ENCODE measurements at regions of chr1 and their contacts with region 1.

Region 1: DNA sequence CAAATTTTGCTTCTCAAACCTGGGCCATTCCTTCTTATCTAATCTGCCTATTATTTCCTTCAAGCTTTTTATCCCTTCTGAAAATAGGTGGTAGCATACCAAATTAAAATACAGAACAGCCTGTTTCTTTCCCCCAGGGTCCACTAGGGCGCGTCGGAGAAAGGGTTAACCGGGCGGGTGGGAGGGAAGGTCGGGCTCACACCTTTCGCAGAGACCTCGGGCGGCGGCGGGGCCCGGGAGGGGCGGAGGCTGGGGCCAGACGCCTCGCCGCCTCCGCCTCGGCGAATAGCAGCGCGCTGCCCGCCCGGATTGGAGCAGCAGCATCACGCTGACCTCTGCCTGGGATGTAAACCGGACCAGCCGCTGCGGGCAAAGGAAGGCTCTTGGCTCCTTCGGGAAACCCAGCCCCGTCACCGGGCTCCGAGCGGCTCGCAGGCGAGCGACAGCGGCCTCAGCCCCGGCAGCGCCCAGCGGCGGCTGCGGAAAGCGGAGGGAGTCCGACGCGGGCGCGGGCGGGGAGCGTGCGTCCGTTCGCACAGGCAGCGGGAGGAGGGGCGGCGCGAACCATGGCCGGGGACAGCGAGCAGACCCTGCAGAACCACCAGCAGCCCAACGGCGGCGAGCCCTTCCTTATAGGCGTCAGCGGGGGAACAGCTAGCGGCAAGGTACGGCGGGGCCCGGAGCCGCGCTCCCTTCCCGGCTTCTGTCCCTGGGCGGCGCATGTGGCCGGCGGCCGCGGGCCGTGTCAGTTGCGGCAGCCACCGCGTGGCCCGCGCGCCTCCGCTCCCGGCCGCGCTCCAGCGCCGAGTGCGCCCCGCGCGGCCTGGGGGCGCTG is at the start of gene UCK2:
- DNase-seq: peak; percentile 85 to 89
- ATAC-seq: peak; percentile 90 to 93 (median 92)
- H3K4me3 ChIP-seq: peak within 1 kb of the TSS; percentile 93
- H3K27ac ChIP-seq: peak within 1 kb of the TSS; percentile 93
- H3K4me1 ChIP-seq: peaks cover 10% of the 10 kb centered on the region
- H3K27me3 ChIP-seq: no peaks in the 10 kb centered on the region
- CTCF ChIP-seq: peak; percentile 24
- total RNA-seq, gene UCK2: 17.2 to 94.6 (median 29.7) TPM

Region 2: DNA sequence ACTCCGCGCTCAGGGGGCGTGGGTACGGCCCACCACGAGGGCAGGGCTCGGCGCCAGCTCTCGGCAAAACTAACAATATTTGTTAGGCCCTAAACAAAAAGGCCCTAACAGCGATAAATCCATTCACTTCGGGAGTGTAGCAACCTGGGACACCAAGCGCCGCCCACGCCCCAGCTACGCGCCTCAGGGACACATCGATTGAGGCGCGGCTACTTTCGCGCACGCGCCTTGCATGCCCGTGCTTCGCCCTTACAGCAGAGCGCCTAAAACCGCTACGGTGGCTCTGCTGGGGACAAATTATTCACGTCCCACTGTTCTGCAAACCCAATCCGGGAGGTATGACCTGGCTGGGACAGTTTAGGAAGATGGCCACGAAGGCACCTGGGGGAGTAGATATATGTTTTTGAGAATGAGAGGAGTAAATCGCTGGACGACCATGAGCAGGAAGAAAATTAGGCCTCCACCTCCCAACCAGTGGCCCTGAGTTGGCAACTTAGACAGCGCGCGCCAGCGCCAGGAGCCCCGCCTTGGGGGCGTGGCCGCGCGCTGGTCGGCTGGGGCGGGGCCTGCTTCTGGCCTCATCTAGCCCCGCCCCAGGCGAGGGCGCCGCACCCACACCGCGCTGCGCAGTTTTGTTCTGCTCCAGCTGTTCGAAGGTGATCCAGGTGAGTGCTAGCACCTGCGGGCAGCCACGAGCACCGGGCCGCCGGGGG is 196.7 kb before region 1 on chr1 and contains the start of gene MGST3:
- intact Hi-C with region 1: loop called in 1 of 2 experiments (anchors 5 kb)
- DNase-seq: peak; percentile 97 to 99
- ATAC-seq: peak; percentile 92 to 96 (median 93)
- H3K4me3 ChIP-seq: peak within 1 kb of the TSS; percentile 95
- H3K27ac ChIP-seq: peak within 1 kb of the TSS; percentile 99
- H3K4me1 ChIP-seq: peaks cover 37% of the 10 kb centered on the region
- H3K27me3 ChIP-seq: no peaks in the 10 kb centered on the region
- CTCF ChIP-seq: no peak
- total RNA-seq, gene MGST3: 223 to 318 (median 258) TPM

Region 3: DNA sequence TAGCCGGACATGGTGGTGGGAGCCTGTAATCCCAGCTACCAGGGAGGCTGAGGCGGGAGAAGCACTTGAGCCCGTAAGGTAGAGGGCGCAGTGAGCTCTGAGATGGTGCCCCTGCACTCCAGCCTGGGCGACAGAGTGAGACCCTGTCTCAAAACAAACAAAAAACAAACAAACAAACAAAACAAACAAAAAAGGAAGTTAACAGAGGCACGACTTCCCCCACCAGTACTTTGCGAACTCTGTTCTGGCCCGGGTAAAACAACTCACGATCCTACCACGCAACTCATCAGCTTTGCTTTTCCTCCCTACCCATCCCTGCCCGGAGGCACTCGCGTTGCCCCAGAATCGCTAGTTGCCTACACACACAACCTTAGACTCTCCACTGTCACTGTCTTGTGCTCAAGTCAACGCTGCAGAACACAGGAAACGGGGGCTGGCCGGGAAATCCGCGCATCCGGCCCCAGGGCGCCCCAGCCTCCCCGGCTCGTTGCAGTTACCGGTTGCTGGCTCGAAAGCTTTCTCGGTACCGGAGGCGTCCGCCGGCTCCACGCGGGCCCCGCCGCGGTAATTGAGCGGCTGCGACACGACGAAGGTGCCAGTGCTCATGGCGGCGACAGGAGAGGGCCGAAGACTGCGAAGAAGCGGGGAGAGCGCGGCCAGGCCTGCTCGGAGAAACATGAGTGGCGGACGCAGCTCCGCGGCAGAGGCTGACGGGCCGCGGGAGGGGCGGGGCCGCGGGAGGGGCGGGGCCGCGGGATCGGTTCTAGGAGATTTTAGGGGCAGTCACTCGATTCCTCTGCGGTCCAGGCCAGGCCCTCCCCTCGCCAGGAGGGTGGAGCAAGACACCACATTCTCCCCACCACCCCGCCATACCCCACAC is 129.4 kb before region 1 on chr1 and contains the start of gene ALDH9A1:
- intact Hi-C with region 1: loop called in 1 of 2 experiments (anchors 5 kb)
- DNase-seq: peak; percentile 93 to 94
- ATAC-seq: peak; percentile 90 to 94 (median 93)
- H3K4me3 ChIP-seq: peak within 1 kb of the TSS; percentile 77
- H3K27ac ChIP-seq: peak within 1 kb of the TSS; percentile 91
- H3K4me1 ChIP-seq: peaks cover 16% of the 10 kb centered on the region
- H3K27me3 ChIP-seq: no peaks in the 10 kb centered on the region
- CTCF ChIP-seq: peak; percentile 33
- total RNA-seq, gene ALDH9A1: 40.9 to 69.3 (median 49.9) TPM

Region 4: GRCh38 chr1:165768513-165769394 is 58.7 kb before region 1 on chr1 and contains the start of gene TMCO1:
- intact Hi-C with region 1: loop called (anchors 5 kb)
- DNase-seq: peak; percentile 94 to 97
- ATAC-seq: peak; percentile 99 to 100 (median 100)
- H3K4me3 ChIP-seq: peak within 1 kb of the TSS; percentile 99
- H3K27ac ChIP-seq: peak within 1 kb of the TSS; percentile 95
- H3K4me1 ChIP-seq: peaks cover 39% of the 10 kb centered on the region
- H3K27me3 ChIP-seq: no peaks in the 10 kb centered on the region
- CTCF ChIP-seq: peak; percentile 11
- total RNA-seq, gene TMCO1: 31.5 to 41.9 (median 33.4) TPM

Region 5: GRCh38 chr1:165862448-165862847 is 35.0 kb after region 1 on chr1:
- intact Hi-C with region 1: loop called in 1 of 2 experiments (anchors 5 kb)
- DNase-seq: peak; percentile 34 to 70
- ATAC-seq: peak; percentile 59 to 84 (median 62)
- H3K4me3 ChIP-seq: no peak overlapping the region
- H3K27ac ChIP-seq: peak overlapping the region; percentile 72
- H3K4me1 ChIP-seq: peaks cover 38% of the 10 kb centered on the region
- H3K27me3 ChIP-seq: no peaks in the 10 kb centered on the region
- CTCF ChIP-seq: no peak

Region 6: GRCh38 chr1:165898837-165899236 is 71.4 kb after region 1 on chr1:
- intact Hi-C with region 1: loop called in 1 of 2 experiments (anchors 2 kb)
- DNase-seq: peak in 1 of 2 donors; percentile 61
- ATAC-seq: peak; percentile 74 to 85 (median 80)
- H3K4me3 ChIP-seq: no peak overlapping the region
- H3K27ac ChIP-seq: peak overlapping the region; percentile 93
- H3K4me1 ChIP-seq: peaks cover 46% of the 10 kb centered on the region
- H3K27me3 ChIP-seq: no peaks in the 10 kb centered on the region
- CTCF ChIP-seq: no peak

Region 7: DNA sequence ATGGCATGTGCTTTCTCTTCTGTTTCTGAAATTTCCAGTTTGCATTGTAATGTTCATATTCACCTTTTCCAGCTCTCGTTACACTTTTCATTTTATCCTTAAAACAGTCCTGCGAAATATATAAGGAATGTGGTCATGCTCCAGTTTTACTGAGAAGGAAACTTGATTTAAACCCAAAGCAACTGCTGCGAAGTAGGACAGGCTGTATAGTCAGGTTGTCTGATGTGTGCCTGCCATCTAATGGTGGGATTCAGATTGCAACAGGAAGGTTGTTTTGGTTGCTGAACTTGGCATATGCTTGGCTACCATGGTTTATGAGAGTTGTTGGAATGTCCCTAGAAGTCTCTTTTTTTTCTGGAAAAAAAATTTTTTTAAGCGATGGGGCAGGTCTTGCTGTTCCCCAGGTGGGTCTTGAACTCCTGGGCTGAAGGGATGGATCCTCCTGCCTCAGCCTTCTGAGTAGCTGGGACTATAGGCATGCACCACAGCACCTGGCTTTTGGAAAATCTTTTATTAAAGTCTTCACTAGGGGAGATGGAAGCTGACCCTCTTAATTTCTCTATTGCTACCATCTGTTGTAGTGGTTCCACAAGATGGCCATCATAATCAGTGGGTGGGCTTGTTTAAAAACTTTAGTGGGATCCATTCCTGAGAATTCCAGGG is 86.8 kb after region 1 on chr1:
- intact Hi-C with region 1: no loop called
- DNase-seq: no peak
- ATAC-seq: peak; percentile 79 to 96 (median 86)
- H3K4me3 ChIP-seq: no peak overlapping the region
- H3K27ac ChIP-seq: no peak overlapping the region
- H3K4me1 ChIP-seq: peaks cover 13% of the 10 kb centered on the region
- H3K27me3 ChIP-seq: no peaks in the 10 kb centered on the region
- CTCF ChIP-seq: peak; percentile 92